GM10248 (cell line): ENCODE measurements at regions of chr11 and their contacts with region 1.

Region 1: DNA sequence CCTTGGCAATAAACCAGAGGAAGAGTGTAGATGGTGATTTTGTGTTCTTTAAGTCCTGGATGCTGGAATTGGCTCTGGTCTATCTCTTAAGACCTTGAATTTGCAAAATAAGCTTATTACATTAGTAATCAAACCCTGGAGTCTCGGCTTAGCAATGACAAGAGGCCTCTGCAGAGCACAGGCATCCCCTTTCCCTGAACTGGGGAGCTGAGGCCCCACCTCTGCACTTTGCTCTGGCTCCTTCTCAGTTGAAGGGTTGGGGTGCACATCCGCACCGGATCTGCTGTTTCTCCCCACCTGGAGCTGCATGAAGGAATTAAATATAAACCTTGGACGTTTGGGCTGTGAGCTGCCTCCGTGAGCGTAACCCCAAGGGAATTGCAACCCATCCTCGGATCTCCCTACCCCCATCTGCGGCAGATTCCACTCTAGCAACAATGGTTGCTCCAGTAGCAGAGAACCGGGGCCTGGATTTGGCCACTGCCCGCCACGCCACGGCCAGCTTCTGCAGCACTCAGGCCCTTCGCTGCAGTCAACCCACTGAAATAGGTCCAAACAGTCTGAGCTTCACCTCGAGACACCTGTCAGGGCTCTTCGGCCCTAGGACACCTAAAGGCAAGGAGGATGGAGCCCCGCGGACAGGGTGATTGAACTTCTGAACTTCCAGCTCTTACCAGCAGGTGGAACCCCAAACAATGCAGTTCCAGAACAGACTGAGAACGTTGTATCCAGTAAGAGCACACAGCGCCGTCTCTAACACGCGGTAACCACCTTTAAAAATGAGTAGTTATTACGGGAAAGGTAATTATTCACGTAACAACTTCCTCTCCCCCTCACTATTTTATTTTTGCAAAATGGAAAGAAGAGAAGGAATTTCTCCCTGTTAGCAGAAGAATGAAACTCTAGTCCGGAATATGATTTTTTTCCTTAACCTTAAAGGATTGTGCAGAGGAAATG is 54.8 kb upstream of the CAPRIN1 start:
- DNase-seq: peak; percentile 77
- CTCF ChIP-seq: peak; percentile 73

Region 2: DNA sequence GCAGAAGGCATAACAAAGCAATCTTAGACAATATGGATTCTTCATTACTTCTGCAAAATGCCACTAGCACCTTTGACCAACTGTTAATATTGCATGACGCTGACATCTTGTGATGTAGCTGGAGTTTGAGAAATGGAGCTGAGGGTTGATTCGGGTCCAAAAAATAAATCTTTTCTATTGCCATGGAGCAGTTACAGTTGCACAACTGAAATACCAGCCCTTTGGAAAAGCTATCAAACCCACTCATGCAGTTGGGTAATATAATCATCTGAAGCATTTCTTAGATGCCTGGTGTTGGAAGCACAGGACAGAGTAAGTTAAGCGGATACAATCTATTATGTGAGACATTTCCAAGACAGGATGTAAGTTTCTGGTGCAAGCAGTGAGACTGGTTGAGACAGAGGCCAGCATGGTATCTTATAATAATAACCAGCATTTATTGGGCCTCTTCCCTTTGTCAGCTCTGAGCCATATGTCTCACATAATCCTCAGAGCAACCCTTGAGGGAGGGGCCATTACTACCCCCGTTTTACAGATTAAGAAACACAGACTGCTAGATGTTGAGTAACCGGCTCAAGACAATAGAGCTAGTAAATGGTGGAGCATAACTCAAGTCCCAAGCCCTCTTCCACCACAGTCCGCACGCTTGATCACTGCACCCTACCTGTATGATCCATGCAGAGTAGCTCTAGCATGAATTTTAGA is 20.1 kb before region 1 on chr11:
- CTCF ChIA-PET with region 1: interaction called, 10 read pairs
- POLR2A ChIA-PET with region 1: no interaction called
- DNase-seq: no peak
- CTCF ChIP-seq: no peak

Region 3: GRCh38 chr11:34006876-34007275 is 10.1 kb after region 1 on chr11:
- CTCF ChIA-PET with region 1: interaction called, 43 read pairs
- POLR2A ChIA-PET with region 1: no interaction called
- DNase-seq: no peak
- CTCF ChIP-seq: no peak

Region 4: GRCh38 chr11:34068111-34068510 is 71.3 kb after region 1 on chr11:
- CTCF ChIA-PET with region 1: interaction called, 5 read pairs
- POLR2A ChIA-PET with region 1: interaction called, 10 read pairs
- DNase-seq: no peak
- CTCF ChIP-seq: no peak

Region 5: DNA sequence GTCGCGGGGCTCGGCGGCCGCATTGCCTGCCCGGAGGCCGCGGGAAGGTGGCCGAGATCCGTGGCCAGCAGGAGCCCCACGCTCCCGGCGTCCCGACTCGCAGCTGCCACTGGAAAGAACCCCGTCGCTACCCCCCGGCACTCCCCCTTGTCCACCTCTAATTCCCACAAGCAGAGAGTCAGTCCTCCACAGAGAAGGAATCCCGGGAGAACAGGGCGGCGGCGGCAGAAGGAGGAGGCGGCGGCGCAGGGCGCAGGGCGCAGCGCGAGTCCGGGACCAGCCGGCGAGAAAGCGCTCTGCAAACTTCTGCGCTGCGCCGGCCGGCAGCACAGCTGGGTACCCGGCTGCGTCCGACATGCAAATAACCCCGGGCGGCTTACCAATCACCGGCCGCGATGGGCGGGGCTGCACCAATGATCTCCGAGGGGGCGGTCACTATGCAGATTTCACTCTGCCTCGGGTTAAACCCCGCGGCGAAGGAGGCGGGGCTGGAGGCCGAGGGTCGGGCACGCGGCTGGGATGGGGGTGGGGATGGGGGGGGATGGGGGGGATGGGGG is 361.0 kb after region 1 on chr11 and contains the start of gene ABTB2:
- CTCF ChIA-PET with region 1: interaction called, 18 read pairs
- POLR2A ChIA-PET with region 1: no interaction called
- DNase-seq: peak; percentile 96
- CTCF ChIP-seq: no peak

Region 6: GRCh38 chr11:34366522-34366921 is 369.7 kb after region 1 on chr11:
- CTCF ChIA-PET with region 1: interaction called, 18 read pairs
- POLR2A ChIA-PET with region 1: no interaction called
- DNase-seq: peak; percentile 44
- CTCF ChIP-seq: peak; percentile 44